ENCODE measurements at regions of chr1 and their contacts with region 1.

Region 1: DNA sequence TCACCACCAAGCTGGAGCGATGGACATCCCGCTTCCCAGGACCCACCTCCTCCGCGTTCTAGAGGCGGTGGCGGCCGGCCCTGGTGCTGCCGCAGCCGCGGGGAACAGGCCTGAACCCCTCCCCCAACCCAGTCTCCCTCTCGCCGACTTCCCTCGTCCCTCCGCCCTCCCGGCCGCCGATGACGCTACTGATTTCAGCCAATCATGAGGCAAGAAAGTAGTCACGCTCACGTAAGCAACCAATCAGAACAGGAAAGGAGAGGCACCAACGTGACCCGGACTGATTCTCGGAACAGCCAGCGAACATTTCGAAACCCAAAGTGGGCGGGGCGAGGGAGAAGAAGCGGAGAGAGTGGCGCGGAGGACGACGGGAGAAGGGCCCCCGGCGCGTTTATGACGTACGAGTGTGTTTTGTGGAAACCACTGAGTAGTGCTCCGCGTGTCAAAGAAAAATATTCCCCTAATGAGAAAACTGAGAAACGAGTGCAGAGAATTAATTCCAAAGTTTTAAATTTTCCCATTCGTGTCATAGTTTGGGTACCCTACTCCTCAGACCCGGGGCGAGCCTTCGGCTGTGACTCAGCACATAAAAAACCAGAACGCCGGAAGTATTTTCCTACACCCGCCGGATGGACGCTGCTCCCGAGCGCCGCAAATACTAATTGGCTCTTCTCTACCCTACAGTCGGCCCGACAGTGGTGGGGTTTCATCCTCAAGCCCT is at the start of gene NRDC:
- DNase-seq: peak; percentile 93
- ATAC-seq: peak; percentile 90
- H3K4me3 Mint-ChIP-seq: no peak within 1 kb of the TSS
- H3K27ac Mint-ChIP-seq: no peak within 1 kb of the TSS
- H3K4me1 Mint-ChIP-seq: peaks cover 29% of the 10 kb centered on the region
- H3K27me3 Mint-ChIP-seq: no peaks in the 10 kb centered on the region
- CTCF ChIP-seq: no peak
- total RNA-seq, gene NRDC: 157 and 162 TPM in 2 replicates

Region 2: DNA sequence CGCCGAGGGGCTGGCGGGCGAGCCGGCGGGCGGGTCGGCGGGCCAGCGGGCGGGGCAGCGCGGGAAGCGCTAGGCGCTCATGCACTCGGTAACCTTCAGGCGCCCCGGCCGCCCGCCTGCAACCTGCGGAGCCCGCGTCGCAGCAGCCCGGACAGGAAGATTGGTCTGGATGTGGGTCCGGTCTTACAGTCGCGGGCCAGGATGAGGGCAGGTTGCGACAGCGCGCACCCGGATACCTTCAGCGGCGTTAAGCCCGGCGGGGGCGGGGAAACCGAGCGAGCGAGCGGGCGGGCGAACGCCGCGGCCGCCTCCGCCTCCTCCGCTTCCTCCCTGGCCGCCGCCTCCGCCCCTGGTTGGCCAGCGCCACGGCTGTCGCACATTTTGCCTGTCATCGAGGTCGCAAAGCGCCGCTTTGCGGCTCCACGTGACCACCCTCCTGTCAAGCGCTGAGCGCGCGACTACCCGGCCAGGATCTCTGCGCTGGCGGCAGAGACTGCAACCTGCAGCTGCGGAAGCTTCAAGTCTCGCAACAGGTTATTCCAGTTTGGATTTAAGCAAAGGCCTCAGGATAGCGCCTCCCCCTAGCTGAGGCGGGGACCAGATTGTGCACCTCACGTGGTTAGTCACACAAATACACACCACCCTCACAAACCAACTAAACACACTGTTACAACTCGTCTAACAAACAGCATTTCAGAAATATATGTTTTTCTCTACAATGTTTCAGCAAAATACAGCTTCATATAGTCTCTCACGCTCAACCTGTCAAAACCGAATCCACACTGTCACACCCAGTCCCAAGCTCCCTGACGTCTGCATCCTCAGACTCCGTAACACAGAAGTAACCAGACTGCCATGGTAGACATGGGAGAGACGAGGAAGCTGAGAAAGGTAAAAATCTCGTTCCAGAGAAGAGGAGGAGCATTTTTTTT is 918.6 kb before region 1 on chr1 and contains the start of gene FAF1:
- CTCF ChIA-PET with region 1: no interaction called
- POLR2A ChIA-PET with region 1: no interaction called
- intact Hi-C with region 1: loop called (anchors 2 kb)
- DNase-seq: peak; percentile 98
- ATAC-seq: peak; percentile 90
- H3K4me3 Mint-ChIP-seq: peak within 1 kb of the TSS; percentile 93
- H3K27ac Mint-ChIP-seq: peak within 1 kb of the TSS; percentile 95
- H3K4me1 Mint-ChIP-seq: peaks cover 23% of the 10 kb centered on the region
- H3K27me3 Mint-ChIP-seq: no peaks in the 10 kb centered on the region
- CTCF ChIP-seq: no peak
- total RNA-seq, gene FAF1: 57.2 and 61.7 TPM in 2 replicates

Region 3: GRCh38 chr1:51235673-51236530 is 642.9 kb before region 1 on chr1 and contains the start of gene RNF11:
- CTCF ChIA-PET with region 1: no interaction called
- POLR2A ChIA-PET with region 1: interaction called, 3 read pairs
- intact Hi-C with region 1: loop called (anchors 5 kb)
- DNase-seq: peak; percentile 94
- ATAC-seq: peak; percentile 74
- H3K4me3 Mint-ChIP-seq: peak within 1 kb of the TSS; percentile 92
- H3K27ac Mint-ChIP-seq: peak within 1 kb of the TSS; percentile 93
- H3K4me1 Mint-ChIP-seq: peaks cover 24% of the 10 kb centered on the region
- H3K27me3 Mint-ChIP-seq: peaks cover 4% of the 10 kb centered on the region
- CTCF ChIP-seq: no peak
- total RNA-seq, gene RNF11: 15.3 and 17.1 TPM in 2 replicates

Region 4: GRCh38 chr1:51799372-51799771 is 79.4 kb before region 1 on chr1:
- CTCF ChIA-PET with region 1: no interaction called
- POLR2A ChIA-PET with region 1: no interaction called
- intact Hi-C with region 1: loop called (anchors 5 kb)
- DNase-seq: no peak
- ATAC-seq: peak; percentile 45
- H3K4me3 Mint-ChIP-seq: no peak overlapping the region
- H3K27ac Mint-ChIP-seq: no peak overlapping the region
- H3K4me1 Mint-ChIP-seq: peaks cover 20% of the 10 kb centered on the region
- H3K27me3 Mint-ChIP-seq: no peaks in the 10 kb centered on the region
- CTCF ChIP-seq: no peak

Region 5: GRCh38 chr1:51863384-51863783 is 15.4 kb before region 1 on chr1:
- CTCF ChIA-PET with region 1: interaction called, 3 read pairs
- POLR2A ChIA-PET with region 1: interaction called, 24 read pairs
- intact Hi-C with region 1: loop called (anchors 1 kb)
- DNase-seq: no peak
- ATAC-seq: peak; percentile 69
- H3K4me3 Mint-ChIP-seq: peak overlapping the region; percentile 1
- H3K27ac Mint-ChIP-seq: peak overlapping the region; percentile 77
- H3K4me1 Mint-ChIP-seq: peaks cover 40% of the 10 kb centered on the region
- H3K27me3 Mint-ChIP-seq: no peaks in the 10 kb centered on the region
- CTCF ChIP-seq: no peak

Region 6: GRCh38 chr1:53014791-53015507 is 1136.2 kb after region 1 on chr1:
- CTCF ChIA-PET with region 1: no interaction called
- POLR2A ChIA-PET with region 1: no interaction called
- intact Hi-C with region 1: loop called (anchors 10 kb)
- DNase-seq: peak; percentile 37
- ATAC-seq: peak; percentile 94
- H3K4me3 Mint-ChIP-seq: peak overlapping the region; percentile 92
- H3K27ac Mint-ChIP-seq: peak overlapping the region; percentile 72
- H3K4me1 Mint-ChIP-seq: peaks cover 36% of the 10 kb centered on the region
- H3K27me3 Mint-ChIP-seq: no peaks in the 10 kb centered on the region
- CTCF ChIP-seq: no peak